Activated T-helper 2 cell treated with anti-CD3 and anti-CD28 coated beads, Interferon-gamma antibody, Interleukin-2, Interleukin-4, amounts not matched to agents 10 μg/mL and 5 μg/mL and 100 μg/mL, durations not matched to agents 14 hours and 24 hours and 36 hours (primary cell): ENCODE measurements at regions of chr7 and their contacts with region 1.

Region 1: DNA sequence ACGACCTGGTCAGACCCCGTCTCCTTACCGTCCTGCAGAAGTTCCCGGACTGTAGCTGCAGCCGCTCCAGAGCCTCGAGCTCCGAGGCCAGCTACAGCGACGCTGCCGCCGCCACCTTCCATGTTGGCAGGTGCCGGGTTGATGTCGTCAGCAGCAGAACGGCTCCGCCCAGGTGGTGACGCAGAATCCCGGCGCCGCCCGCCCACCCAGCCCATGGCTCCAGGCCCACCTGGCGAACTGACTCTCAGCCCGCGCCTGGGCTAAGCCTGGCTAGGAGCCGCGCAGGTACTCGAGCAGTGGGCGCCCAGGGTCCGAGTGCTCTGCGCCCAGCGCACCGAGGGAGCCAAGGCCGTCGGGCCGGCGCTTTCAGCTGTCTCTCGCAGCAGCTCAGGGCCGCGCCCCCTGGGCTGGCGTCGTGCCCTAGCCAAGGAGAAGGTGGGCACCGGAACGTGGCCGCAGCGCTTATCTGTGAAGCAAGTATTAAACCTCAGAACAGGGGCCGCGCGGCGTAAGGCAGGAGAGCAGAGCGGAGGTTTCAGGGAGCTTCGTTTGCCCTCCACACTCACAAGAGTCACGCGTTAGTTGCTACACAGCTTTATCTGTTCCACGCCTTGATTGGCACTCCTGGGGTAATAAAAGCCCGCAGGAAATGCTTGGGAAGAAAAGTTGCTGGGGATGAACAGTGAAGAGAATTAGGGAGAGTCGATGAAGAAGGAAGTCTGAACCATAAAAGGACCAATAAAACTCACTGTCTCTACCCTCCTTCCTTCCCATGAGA is at the starts of genes COG5 and DUS4L:
- DNase-seq: peak; percentile 77
- H3K4me3 Mint-ChIP-seq: peak within 1 kb of the TSS; percentile 80
- H3K27ac Mint-ChIP-seq: peak within 1 kb of the TSS; percentile 86
- H3K4me1 Mint-ChIP-seq: peaks cover 53% of the 10 kb centered on the region
- H3K27me3 Mint-ChIP-seq: no peaks in the 10 kb centered on the region
- total RNA-seq, gene COG5: 35.2 and 36.0 TPM in 2 replicates
- total RNA-seq, gene DUS4L: 10.8 and 12.8 TPM in 2 replicates

Region 2: DNA sequence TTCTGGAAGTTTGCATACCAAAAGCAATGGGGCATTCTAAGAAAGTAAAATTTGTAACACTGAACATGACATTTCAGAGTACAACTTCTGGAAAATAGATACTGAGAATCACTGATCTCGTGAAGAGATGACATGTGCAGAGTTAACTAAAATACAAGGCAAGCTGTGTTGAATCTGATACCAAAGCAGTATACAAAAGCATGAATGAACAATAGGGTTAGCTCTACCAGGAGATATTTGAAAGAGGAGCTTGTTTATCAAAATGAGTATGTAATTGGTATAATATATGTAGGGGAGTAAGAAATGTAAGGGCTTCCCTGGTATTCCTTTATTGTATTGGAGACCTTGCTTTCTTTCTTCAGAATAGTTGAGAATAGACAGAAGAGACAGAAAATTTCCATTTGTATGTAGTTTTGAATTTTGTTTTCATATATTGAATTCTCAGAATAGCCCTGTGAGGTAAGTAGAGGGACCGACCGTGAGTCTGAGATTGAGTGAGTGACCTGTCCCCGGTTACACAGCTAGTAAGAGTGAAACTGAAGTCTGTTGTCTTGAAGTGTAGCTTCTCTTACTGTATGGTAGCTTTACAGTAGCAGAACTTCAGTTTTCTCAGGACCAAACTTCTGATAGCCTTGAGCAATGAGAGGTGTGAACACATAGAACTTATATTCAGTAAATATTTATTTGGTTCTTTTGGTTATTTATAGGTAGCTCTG is 390.1 kb before region 1 on chr7:
- intact Hi-C with region 1: loop called (anchors 1 kb)
- DNase-seq: no peak
- H3K4me3 Mint-ChIP-seq: no peak overlapping the region
- H3K27ac Mint-ChIP-seq: peak overlapping the region; percentile 81
- H3K4me1 Mint-ChIP-seq: peaks cover 35% of the 10 kb centered on the region
- H3K27me3 Mint-ChIP-seq: no peaks in the 10 kb centered on the region

Region 3: GRCh38 chr7:107277331-107277730 is 286.6 kb before region 1 on chr7:
- intact Hi-C with region 1: no loop called
- DNase-seq: no peak
- H3K4me3 Mint-ChIP-seq: no peak overlapping the region
- H3K27ac Mint-ChIP-seq: no peak overlapping the region
- H3K4me1 Mint-ChIP-seq: peaks cover 5% of the 10 kb centered on the region
- H3K27me3 Mint-ChIP-seq: no peaks in the 10 kb centered on the region

Region 4: GRCh38 chr7:107622429-107622828 is 58.5 kb after region 1 on chr7:
- intact Hi-C with region 1: no loop called
- DNase-seq: no peak
- H3K4me3 Mint-ChIP-seq: no peak overlapping the region
- H3K27ac Mint-ChIP-seq: no peak overlapping the region
- H3K4me1 Mint-ChIP-seq: no peaks in the 10 kb centered on the region
- H3K27me3 Mint-ChIP-seq: no peaks in the 10 kb centered on the region

Region 5: GRCh38 chr7:107661081-107661864 is 97.3 kb after region 1 on chr7:
- intact Hi-C with region 1: loop called (anchors 1 kb)
- DNase-seq: peak; percentile 54
- H3K4me3 Mint-ChIP-seq: peak overlapping the region; percentile 94
- H3K27ac Mint-ChIP-seq: peak overlapping the region; percentile 82
- H3K4me1 Mint-ChIP-seq: peaks cover 39% of the 10 kb centered on the region
- H3K27me3 Mint-ChIP-seq: no peaks in the 10 kb centered on the region

Region 6: DNA sequence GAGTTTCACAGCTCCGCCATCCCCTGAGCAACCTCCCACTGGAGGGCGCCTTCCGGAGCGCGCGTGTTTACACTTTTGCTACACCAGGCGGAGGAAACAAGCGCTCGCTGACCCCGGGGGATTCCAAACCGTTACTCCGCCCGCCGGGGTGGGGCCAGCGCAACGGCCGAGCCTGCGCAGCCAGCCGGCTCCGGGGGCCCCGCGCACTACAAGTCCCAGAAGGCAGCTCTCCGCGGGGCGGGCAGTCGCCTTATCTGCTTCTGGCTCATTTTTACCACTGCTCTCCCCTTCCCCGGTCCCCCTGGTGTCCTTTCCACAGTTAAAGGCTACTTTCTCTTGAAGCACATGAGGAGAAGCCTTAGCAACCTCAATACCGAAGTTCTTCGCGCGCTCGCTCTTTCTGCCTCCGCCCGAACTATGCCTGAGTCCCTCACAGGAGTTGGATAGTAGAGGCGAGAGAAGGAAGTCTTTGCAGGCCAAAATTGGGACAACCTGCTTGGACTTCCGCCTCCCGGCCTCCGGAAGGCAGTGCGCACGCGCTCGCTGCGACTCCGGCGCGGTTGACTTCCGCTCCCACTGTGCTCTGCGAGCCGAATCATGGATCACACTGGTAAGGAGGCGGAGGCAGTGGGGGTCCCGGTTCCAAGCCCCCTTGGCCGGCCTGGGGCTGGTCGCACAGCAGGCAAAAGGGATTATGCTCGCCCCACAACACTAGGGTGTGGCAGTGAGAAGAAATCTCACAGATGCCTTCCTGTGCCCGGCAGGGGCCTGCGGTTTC is 179.8 kb after region 1 on chr7 and contains the start of gene CBLL1:
- intact Hi-C with region 1: loop called (anchors 5 kb)
- DNase-seq: peak; percentile 98
- H3K4me3 Mint-ChIP-seq: peak within 1 kb of the TSS; percentile 96
- H3K27ac Mint-ChIP-seq: peak within 1 kb of the TSS; percentile 100
- H3K4me1 Mint-ChIP-seq: peaks cover 33% of the 10 kb centered on the region
- H3K27me3 Mint-ChIP-seq: peaks cover 4% of the 10 kb centered on the region
- total RNA-seq, gene CBLL1: 39.1 and 43.7 TPM in 2 replicates

Region 7: DNA sequence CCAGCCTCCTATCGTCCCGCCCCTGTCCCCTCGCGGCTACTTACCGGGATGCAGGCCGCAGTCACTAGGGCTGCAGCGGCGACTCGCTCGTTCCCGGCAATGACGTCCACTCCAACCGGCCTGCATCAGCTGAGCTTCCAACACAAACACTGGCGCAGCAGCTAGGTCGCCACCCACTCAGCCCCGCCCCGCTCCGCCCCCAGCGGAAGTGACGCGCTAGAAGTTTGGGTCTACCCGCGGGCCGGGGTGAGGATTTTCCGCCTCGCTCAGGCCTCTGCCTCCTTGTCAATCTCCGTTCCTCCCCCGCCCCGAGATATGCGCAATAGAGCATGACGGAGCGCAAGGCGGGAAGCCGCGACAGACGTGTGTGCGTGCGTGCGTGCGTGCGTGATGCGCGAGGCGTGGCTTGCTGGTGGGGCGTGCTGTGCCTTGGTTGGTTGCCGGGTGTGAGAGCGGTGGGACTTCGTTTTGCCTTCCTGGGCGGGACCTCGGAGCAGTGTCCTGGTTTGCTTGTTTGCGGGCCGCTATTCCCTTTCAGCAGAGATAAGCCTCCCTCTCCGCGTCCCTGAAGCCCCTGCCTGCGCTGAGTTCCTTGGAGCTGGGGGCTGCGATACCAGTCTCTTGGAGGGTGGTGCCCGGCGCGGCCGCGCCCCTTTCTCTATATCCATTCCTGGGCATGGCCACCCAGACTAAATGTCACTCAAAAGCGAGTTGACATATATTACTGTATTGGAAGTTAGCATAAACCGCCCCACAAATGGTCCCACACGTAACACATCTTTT is 962.2 kb after region 1 on chr7 and contains the start of gene PNPLA8:
- intact Hi-C with region 1: loop called (anchors 10 kb)
- DNase-seq: peak; percentile 100
- H3K4me3 Mint-ChIP-seq: peak within 1 kb of the TSS; percentile 89
- H3K27ac Mint-ChIP-seq: peak within 1 kb of the TSS; percentile 98
- H3K4me1 Mint-ChIP-seq: peaks cover 39% of the 10 kb centered on the region
- H3K27me3 Mint-ChIP-seq: peaks cover 4% of the 10 kb centered on the region
- total RNA-seq, gene PNPLA8: 21.5 and 22.4 TPM in 2 replicates